Stomach (tissue), 19 donors: ENCODE measurements at regions of chr1 and their contacts with region 1.

Region 1: DNA sequence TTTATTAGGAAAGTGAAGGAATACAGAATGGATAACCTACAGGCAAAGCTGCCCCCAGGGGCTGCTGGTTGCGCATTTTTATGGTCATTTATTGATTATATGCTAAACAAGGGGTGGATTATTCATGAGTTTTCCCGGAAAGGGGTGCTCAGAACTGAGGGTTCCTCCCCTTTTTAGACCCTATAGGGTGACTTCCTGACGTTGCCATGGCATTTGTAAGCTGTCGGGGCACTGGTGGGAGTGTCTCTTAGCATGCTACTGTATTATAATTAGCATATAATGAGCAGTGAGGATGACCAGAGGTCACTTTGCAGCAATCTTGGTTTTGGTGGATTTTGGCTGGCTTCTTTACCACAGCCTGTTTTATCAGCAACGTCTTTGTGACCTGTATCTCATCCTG is 5.9 kb upstream of the ASAP3 start:
- DNase-seq: no peak
- H3K4me3 ChIP-seq: no peak overlapping the region
- H3K27ac ChIP-seq: no peak overlapping the region
- H3K4me1 ChIP-seq: peaks cover 0 to 11% (median 5%) of the 10 kb centered on the region in 4 donors
- H3K27me3 ChIP-seq: no peaks in the 10 kb centered on the region
- CTCF ChIP-seq: no peak
- EP300 ChIP-seq: no peak
- POLR2A ChIP-seq: no peak

Region 2: GRCh38 chr1:23044035-23044434 is 445.8 kb before region 1 on chr1:
- intact Hi-C with region 1: no loop called
- DNase-seq: no peak
- H3K4me3 ChIP-seq: no peak overlapping the region
- H3K27ac ChIP-seq: no peak overlapping the region
- H3K4me1 ChIP-seq: peaks cover 0 to 33% (median 5%) of the 10 kb centered on the region in 4 donors
- H3K27me3 ChIP-seq: no peaks in the 10 kb centered on the region
- CTCF ChIP-seq: no peak
- EP300 ChIP-seq: no peak
- POLR2A ChIP-seq: no peak

Region 3: GRCh38 chr1:23539698-23540266 is 49.9 kb after region 1 on chr1:
- intact Hi-C with region 1: loop called (anchors 5 kb)
- DNase-seq: peak; percentile 92 to 96
- H3K4me3 ChIP-seq: peak overlapping the region in 3 of 4 donors; percentile 1 to 28 (median 13)
- H3K27ac ChIP-seq: peak overlapping the region in 1 of 5 donors; percentile 34
- H3K4me1 ChIP-seq: peaks cover 5 to 15% (median 10%) of the 10 kb centered on the region in 4 donors
- H3K27me3 ChIP-seq: no peaks in the 10 kb centered on the region
- CTCF ChIP-seq: peak in 5 of 7 experiments; percentile 80 to 94 (median 87)
- EP300 ChIP-seq: no peak
- POLR2A ChIP-seq: no peak

Region 4: DNA sequence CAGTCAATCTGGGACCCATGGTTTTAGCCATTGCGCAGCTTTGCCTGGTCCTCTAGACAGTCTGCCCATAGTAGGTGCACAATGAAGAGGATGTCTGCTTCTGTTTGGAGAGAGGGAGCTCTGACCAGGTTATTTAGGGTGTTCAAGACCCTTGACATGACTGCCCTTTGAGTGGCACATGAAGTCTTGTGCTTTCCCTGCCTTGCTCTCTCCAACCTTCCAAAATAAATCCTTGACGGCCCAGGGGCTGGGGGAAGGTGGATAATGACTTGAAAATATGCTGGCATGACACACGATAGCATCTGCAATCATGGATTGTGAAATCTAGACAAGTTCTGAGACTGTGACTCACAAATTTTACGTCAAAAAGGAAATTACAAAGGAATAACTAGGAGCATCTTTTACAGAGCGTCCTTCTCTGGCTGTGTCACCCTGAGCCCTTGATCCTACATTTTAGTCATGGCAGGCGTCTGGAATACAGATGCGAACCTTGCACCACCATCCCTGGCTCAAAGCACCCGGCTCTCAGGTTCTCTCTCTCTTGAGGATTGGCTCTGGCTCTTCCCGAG is 95.7 kb after region 1 on chr1:
- intact Hi-C with region 1: no loop called
- DNase-seq: no peak
- H3K4me3 ChIP-seq: no peak overlapping the region
- H3K27ac ChIP-seq: peak overlapping the region in 1 of 5 donors; percentile 14
- H3K4me1 ChIP-seq: peaks cover 0 to 4% (median 0%) of the 10 kb centered on the region in 4 donors
- H3K27me3 ChIP-seq: no peaks in the 10 kb centered on the region
- CTCF ChIP-seq: no peak
- EP300 ChIP-seq: no peak
- POLR2A ChIP-seq: no peak